Activated B cell treated with CpG ODN at 0.5 μM for 24 hours (primary cell): ENCODE measurements at regions of chr1 and their contacts with region 1.

Region 1: DNA sequence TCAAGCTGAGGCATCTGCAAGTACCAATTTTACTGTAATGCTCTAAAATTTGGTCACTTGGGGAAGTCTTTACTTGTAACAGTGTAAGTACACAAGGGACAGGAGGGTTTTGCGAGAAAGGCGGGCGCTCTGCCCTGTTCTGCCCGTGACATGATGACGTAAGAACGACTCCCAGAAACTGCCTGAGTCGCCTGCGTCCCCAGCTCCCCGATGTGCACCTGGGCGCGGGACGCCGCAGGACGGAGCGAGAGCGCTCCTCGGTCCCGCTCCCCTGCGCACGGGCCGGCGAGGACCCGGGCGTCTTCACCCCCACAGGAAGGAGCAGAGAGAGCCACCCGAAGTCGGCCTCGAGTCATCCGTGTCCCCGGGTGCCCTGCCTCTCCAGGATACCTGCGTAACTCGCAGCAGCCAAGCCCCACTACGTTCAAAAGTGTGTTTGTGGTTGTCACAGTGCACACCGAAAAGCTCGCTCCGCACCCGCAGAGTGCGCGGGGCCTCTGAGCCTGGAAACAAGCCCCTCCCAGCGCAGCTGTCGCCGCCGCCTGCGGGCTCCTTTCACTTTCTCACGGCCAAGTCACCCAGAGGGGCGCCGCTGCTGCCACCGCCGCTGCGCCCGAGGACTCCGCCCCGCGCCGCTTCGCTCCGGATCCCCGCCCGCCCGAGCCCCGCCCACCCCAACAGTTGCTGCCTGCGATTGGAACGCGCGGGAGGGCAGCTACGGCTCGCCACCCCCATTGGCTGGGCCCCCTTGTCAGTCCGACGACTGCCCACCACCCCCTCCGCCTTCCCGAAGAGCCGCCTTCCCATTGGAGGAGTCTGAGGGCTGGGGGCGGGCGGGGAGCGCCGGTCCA is 3.2 kb upstream of the ZBTB18 start:
- DNase-seq: peak; percentile 84
- ATAC-seq: peak; percentile 83
- H3K4me3 Mint-ChIP-seq: peak overlapping the region; percentile 97
- H3K27ac Mint-ChIP-seq: peak overlapping the region; percentile 99
- H3K4me1 Mint-ChIP-seq: peaks cover 22% of the 10 kb centered on the region
- H3K27me3 Mint-ChIP-seq: no peaks in the 10 kb centered on the region
- CTCF ChIP-seq: no peak

Region 2: DNA sequence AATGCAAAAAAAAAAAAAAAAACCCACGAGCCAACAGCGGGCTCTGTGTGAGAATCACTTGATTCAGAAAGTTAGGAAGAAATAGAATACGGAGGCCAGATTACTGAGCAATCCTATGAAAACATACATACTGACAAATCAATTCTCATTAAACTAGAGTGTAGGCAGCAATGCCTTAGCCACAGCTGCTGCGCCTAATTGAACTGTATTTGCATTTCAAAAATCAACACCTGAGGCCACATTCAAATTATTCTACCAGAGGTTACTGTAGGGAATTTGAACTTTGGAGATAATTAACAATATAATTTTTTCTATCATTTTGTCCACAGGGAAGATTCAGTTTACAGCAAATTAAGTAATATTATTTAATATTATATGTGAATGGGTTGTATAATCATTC is 1385.0 kb before region 1 on chr1:
- CTCF ChIA-PET with region 1: no interaction called
- POLR2A ChIA-PET with region 1: no interaction called
- intact Hi-C with region 1: no loop called
- DNase-seq: no peak
- ATAC-seq: no peak
- H3K4me3 Mint-ChIP-seq: no peak overlapping the region
- H3K27ac Mint-ChIP-seq: no peak overlapping the region
- H3K4me1 Mint-ChIP-seq: no peaks in the 10 kb centered on the region
- H3K27me3 Mint-ChIP-seq: peaks cover 6% of the 10 kb centered on the region
- CTCF ChIP-seq: no peak

Region 3: GRCh38 chr1:242784074-242784473 is 1263.8 kb before region 1 on chr1:
- CTCF ChIA-PET with region 1: no interaction called
- POLR2A ChIA-PET with region 1: no interaction called
- intact Hi-C with region 1: loop called (anchors 10 kb)
- DNase-seq: no peak
- ATAC-seq: peak; percentile 80
- H3K4me3 Mint-ChIP-seq: peak overlapping the region; percentile 61
- H3K27ac Mint-ChIP-seq: peak overlapping the region; percentile 94
- H3K4me1 Mint-ChIP-seq: peaks cover 66% of the 10 kb centered on the region
- H3K27me3 Mint-ChIP-seq: no peaks in the 10 kb centered on the region
- CTCF ChIP-seq: no peak

Region 4: GRCh38 chr1:243727503-243728203 is 320.2 kb before region 1 on chr1:
- CTCF ChIA-PET with region 1: no interaction called
- POLR2A ChIA-PET with region 1: no interaction called
- intact Hi-C with region 1: loop called (anchors 5 kb)
- DNase-seq: peak; percentile 20
- ATAC-seq: peak; percentile 86
- H3K4me3 Mint-ChIP-seq: peak overlapping the region; percentile 39
- H3K27ac Mint-ChIP-seq: peak overlapping the region; percentile 76
- H3K4me1 Mint-ChIP-seq: peaks cover 55% of the 10 kb centered on the region
- H3K27me3 Mint-ChIP-seq: no peaks in the 10 kb centered on the region
- CTCF ChIP-seq: no peak

Region 5: DNA sequence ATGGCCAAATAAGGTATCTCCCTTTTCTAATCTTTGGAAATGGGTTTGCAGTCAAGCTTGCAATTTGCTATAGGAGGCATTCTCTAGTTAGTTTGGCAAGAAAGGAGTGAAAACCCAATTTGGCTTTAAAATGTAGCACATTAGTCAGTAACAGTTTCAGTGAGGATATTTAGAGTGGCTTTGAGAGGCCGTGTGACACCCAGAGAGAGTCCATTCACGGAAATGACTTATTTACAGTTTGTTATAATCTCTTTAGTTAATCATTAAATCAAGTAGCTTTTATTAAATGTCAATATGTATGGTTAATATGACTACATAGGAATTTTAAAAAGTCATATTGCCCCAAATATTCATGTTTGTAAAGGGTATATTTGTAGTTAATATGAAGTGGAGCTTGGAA is 12.8 kb after region 1 on chr1:
- CTCF ChIA-PET with region 1: no interaction called
- POLR2A ChIA-PET with region 1: interaction called, 6 read pairs
- intact Hi-C with region 1: loop called (anchors 1 kb)
- DNase-seq: no peak
- ATAC-seq: no peak
- H3K4me3 Mint-ChIP-seq: no peak overlapping the region
- H3K27ac Mint-ChIP-seq: no peak overlapping the region
- H3K4me1 Mint-ChIP-seq: peaks cover 17% of the 10 kb centered on the region
- H3K27me3 Mint-ChIP-seq: no peaks in the 10 kb centered on the region
- CTCF ChIP-seq: no peak

Region 6: GRCh38 chr1:244210884-244211558 is 163.2 kb after region 1 on chr1:
- CTCF ChIA-PET with region 1: no interaction called
- POLR2A ChIA-PET with region 1: no interaction called
- intact Hi-C with region 1: loop called (anchors 2 kb)
- DNase-seq: no peak
- ATAC-seq: no peak
- H3K4me3 Mint-ChIP-seq: no peak overlapping the region
- H3K27ac Mint-ChIP-seq: no peak overlapping the region
- H3K4me1 Mint-ChIP-seq: peaks cover 11% of the 10 kb centered on the region
- H3K27me3 Mint-ChIP-seq: no peaks in the 10 kb centered on the region
- CTCF ChIP-seq: no peak

Region 7: DNA sequence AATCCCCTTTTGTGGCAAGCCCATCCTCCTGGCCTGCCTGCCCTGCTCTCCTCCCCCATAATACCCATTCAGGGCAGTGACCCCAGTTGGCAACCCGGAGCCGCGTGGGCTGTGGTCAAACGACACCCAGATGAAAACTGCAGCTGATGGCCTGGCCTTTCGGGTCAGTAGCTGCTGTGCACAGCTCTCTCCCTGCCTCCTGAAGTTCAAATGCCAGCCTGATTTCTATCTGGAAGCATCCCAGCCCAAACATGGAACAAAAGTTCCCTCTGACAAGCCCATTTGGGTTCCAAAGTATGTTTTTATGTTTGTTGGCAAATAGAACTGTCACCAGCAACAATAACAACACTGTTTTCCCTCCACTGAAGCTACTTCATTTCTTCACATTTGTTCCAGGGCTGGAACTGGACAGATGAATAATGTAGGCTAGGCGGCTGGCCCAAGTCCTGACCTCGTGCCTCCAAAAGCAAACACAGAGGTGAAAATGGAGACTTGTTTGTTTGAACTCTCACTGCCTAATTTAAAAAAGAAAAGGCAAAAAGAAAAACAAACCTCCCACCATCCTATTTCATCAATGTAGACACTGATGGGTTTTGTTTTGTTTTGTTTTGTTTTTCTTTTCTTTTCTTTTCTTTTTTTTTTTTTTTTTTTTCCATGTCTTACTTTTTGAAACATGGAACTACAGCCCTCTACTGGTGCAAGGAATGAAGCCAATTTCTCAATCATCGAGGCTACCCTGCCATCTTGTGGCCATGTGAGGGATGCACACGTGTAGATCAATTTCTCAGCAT is 224.8 kb after region 1 on chr1:
- CTCF ChIA-PET with region 1: interaction called, 4 read pairs
- POLR2A ChIA-PET with region 1: interaction called, 9 read pairs
- intact Hi-C with region 1: loop called (anchors 1 kb)
- DNase-seq: peak; percentile 50
- ATAC-seq: peak; percentile 96
- H3K4me3 Mint-ChIP-seq: no peak overlapping the region
- H3K27ac Mint-ChIP-seq: no peak overlapping the region
- H3K4me1 Mint-ChIP-seq: peaks cover 21% of the 10 kb centered on the region
- H3K27me3 Mint-ChIP-seq: no peaks in the 10 kb centered on the region
- CTCF ChIP-seq: peak; percentile 92

Region 8: DNA sequence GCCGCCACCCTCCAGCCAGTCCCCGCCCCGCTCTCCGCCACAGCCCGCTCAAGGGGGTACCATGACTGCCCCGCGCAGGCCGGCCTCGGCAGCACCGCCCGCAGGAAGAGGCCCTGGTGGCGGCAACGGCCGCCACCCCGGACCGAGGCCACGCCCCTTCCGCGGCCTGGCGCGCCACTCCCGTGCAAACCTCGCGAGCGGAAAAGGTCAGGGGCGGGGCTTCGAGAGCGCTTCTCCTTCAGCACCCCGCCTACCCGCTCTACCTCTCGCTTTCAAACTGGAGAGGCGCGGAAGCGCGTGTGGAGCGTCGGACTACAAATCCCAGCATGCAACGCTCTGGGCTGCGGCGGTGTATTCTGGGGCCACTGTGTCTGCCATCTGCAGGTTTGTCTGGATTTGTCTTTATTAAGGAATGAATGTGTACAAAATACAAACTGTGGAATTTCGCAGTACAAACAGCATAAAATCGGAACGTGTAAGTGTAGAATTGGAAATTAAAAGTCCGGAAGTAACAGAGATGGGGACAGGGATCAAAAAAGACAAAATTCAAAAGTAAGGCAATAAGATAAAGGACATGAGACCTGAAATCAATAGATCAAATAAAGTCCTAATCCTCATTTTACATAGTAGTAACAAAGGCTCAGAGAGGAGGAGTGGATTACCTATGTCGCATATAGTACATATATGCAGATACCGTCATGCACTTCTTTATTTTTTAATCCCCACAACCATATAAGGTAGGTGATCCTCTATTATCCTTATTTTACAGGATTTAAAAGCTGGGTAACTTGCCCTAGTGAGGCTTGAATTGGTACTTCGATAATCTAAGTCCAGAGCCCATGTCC is 404.3 kb after region 1 on chr1:
- CTCF ChIA-PET with region 1: no interaction called
- POLR2A ChIA-PET with region 1: interaction called, 5 read pairs
- intact Hi-C with region 1: loop called (anchors 1 kb)
- DNase-seq: peak; percentile 97
- ATAC-seq: peak; percentile 94
- H3K4me3 Mint-ChIP-seq: peak overlapping the region; percentile 95
- H3K27ac Mint-ChIP-seq: peak overlapping the region; percentile 78
- H3K4me1 Mint-ChIP-seq: peaks cover 32% of the 10 kb centered on the region
- H3K27me3 Mint-ChIP-seq: no peaks in the 10 kb centered on the region
- CTCF ChIP-seq: no peak